Mammary epithelial cell (primary cell): ENCODE measurements at regions of chr13 and their contacts with region 1.

Region 1: GRCh38 chr13:27620377-27621115 is at the start of gene LNX2:
- DNase-seq: peak; percentile 97
- H3K4me3 ChIP-seq: peak within 1 kb of the TSS; percentile 72 to 93 (median 87)
- H3K27ac ChIP-seq: peak within 1 kb of the TSS; percentile 93
- H3K4me1 ChIP-seq: peaks cover 35% of the 10 kb centered on the region
- H3K27me3 ChIP-seq: no peaks in the 10 kb centered on the region
- CTCF ChIP-seq: no peak
- total RNA-seq, gene LNX2: 16.1 to 26.3 TPM

Region 2: GRCh38 chr13:27079421-27079958 is 541.1 kb before region 1 on chr13:
- CTCF ChIA-PET with region 1: no interaction called
- dilution Hi-C with region 1: no loop called
- in situ Hi-C with region 1: no loop called
- intact Hi-C with region 1: no loop called
- DNase-seq: peak; percentile 4
- H3K4me3 ChIP-seq: no peak overlapping the region
- H3K27ac ChIP-seq: no peak overlapping the region
- H3K4me1 ChIP-seq: no peaks in the 10 kb centered on the region
- H3K27me3 ChIP-seq: no peaks in the 10 kb centered on the region
- CTCF ChIP-seq: no peak

Region 3: DNA sequence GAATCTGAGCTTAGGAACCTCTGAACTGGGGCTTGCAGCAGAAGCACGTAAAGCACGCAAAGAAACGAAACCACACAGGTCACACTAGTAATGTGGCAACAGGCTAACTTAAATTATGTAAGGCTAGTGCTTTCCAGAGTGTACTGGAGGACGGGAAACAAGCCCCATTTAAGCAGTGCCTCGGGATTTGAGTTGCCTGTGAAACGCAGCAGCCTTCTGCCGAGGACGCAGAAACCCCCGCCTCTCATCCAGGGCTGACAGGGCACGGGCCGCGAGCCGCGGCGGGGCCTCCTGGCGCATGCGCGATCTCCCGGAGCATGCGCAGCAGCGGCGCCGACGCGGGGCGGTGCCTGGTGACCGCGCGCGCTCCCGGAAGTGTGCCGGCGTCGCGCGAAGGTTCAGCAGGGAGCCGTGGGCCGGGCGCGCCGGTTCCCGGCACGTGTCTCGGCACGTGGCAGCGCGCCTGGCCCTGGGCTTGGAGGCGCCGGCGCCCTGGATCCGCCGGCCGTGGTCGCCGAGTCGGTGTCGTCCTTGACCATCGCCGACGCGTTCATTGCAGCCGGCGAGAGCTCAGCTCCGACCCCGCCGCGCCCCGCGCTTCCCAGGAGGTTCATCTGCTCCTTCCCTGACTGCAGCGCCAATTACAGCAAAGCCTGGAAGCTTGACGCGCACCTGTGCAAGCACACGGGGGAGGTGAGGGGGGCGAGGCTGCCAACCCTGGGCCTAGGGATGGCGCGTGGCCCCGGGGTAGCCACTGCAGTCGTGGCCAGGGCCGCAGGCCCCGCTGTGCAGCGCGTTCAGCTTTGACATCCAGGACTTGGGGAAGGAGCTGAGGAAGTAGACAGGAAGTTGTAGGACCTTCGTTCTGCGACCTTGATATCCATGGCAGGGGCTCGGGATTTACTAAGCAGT is 196.0 kb before region 1 on chr13 and contains the start of gene GTF3A:
- CTCF ChIA-PET with region 1: no interaction called
- dilution Hi-C with region 1: no loop called
- in situ Hi-C with region 1: no loop called
- intact Hi-C with region 1: loop called (anchors 2 kb)
- DNase-seq: peak; percentile 83
- H3K4me3 ChIP-seq: peak within 1 kb of the TSS; percentile 58 to 68 (median 62)
- H3K27ac ChIP-seq: peak within 1 kb of the TSS; percentile 64
- H3K4me1 ChIP-seq: peaks cover 33% of the 10 kb centered on the region
- H3K27me3 ChIP-seq: no peaks in the 10 kb centered on the region
- CTCF ChIP-seq: no peak
- total RNA-seq, gene GTF3A: 62.0 to 69.3 TPM

Region 4: GRCh38 chr13:27533155-27533643 is 87.3 kb before region 1 on chr13:
- CTCF ChIA-PET with region 1: interaction called, 3 read pairs
- dilution Hi-C with region 1: loop called (anchors 5 kb)
- in situ Hi-C with region 1: no loop called
- intact Hi-C with region 1: loop called (anchors 2 kb)
- DNase-seq: peak; percentile 62
- H3K4me3 ChIP-seq: no peak overlapping the region
- H3K27ac ChIP-seq: no peak overlapping the region
- H3K4me1 ChIP-seq: peaks cover 4% of the 10 kb centered on the region
- H3K27me3 ChIP-seq: no peaks in the 10 kb centered on the region
- CTCF ChIP-seq: peak; percentile 78 to 97

Region 5: GRCh38 chr13:27572234-27572901 is 48.2 kb before region 1 on chr13:
- CTCF ChIA-PET with region 1: no interaction called
- dilution Hi-C with region 1: loop called (anchors 5 kb)
- in situ Hi-C with region 1: no loop called
- intact Hi-C with region 1: no loop called
- DNase-seq: no peak
- H3K4me3 ChIP-seq: no peak overlapping the region
- H3K27ac ChIP-seq: peak overlapping the region; percentile 67
- H3K4me1 ChIP-seq: peaks cover 22% of the 10 kb centered on the region
- H3K27me3 ChIP-seq: no peaks in the 10 kb centered on the region
- CTCF ChIP-seq: no peak

Region 6: DNA sequence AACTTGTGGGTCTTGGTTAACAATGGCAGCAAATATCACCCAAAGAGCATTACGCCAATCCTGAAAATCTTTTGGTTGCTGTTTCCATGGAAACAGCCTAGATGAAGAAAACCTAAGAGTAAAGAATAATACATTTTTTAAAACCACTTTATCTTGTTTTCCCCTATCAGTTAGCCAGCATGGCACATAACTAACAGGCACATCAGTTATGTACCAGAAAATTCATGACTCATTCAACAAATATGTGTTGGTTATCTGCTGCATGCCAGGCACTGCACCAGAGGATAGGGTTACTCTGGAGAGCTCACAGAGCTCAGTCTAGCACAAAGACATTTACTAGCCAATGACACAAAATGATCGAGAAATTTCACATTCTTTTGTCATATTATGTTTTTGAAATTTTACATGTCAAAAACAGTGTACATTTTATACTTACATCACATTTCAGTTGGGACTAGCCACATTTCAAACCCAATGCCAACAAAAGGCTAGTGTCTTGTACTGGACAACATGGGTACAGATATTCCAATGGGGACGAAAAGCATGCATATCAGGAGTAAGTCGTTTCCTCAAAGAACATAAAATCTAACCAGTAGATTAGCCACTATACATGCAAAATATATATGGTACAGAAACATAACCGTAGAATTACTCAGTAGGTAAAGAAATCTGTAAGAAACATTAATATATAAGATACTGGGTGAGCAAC is 20.5 kb before region 1 on chr13:
- CTCF ChIA-PET with region 1: no interaction called
- dilution Hi-C with region 1: no loop called
- in situ Hi-C with region 1: no loop called
- intact Hi-C with region 1: loop called (anchors 2 kb)
- DNase-seq: peak; percentile 64
- H3K4me3 ChIP-seq: no peak overlapping the region
- H3K27ac ChIP-seq: no peak overlapping the region
- H3K4me1 ChIP-seq: peaks cover 19% of the 10 kb centered on the region
- H3K27me3 ChIP-seq: no peaks in the 10 kb centered on the region
- CTCF ChIP-seq: no peak

Region 7: DNA sequence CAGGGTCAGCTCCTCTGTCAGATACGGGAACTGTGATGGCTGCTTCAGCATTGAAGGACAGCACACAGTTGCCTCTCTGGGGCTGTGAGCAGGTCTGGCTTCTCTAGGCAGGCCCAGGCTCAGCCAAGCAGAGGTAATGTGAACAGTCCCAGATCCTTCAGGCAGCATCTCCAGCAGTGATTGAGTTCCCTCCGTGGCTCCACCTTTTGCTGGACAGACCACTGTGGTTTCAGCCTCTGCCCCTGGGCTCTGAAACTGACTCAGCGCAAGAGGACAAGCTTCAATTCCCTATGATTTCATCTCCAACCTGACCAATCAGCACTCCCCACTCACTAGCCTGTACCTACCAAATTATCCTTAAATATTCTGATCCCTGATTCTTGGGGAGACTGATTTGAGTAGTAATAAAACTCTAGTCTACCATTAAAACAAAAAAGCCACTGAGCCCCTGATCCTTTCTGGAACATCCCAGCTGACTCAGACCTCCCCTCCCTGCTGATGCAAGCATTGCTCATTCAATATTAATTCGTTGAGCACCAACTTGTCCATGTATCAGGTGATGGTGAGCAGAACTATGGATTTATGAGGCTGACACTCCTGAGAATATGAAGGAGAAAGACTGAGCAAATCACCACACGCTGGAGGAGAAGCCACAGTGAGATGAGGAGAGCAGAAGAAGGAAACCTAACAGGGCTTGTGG is 188.5 kb after region 1 on chr13:
- CTCF ChIA-PET with region 1: no interaction called
- dilution Hi-C with region 1: no loop called
- in situ Hi-C with region 1: no loop called
- intact Hi-C with region 1: loop called (anchors 5 kb)
- DNase-seq: peak; percentile 94
- H3K4me3 ChIP-seq: no peak overlapping the region
- H3K27ac ChIP-seq: peak overlapping the region; percentile 75
- H3K4me1 ChIP-seq: peaks cover 27% of the 10 kb centered on the region
- H3K27me3 ChIP-seq: no peaks in the 10 kb centered on the region
- CTCF ChIP-seq: no peak